ENCODE measurements at regions of chr6 and their contacts with region 1.

Region 1: GRCh38 chr6:157184202-157185020 is 138.9 kb downstream of the TMEM242 start:
- DNase-seq: peak; percentile 69
- ATAC-seq: peak; percentile 95
- H3K4me3 ChIP-seq: no peak overlapping the region
- H3K27ac ChIP-seq: no peak overlapping the region
- H3K4me1 ChIP-seq: peaks cover 26% of the 10 kb centered on the region
- H3K27me3 ChIP-seq: no peaks in the 10 kb centered on the region
- CTCF ChIP-seq: peak; percentile 91
- EP300 ChIP-seq: no peak
- POLR2A ChIP-seq: no peak
- RAD21 ChIP-seq: peak; percentile 93

Region 2: DNA sequence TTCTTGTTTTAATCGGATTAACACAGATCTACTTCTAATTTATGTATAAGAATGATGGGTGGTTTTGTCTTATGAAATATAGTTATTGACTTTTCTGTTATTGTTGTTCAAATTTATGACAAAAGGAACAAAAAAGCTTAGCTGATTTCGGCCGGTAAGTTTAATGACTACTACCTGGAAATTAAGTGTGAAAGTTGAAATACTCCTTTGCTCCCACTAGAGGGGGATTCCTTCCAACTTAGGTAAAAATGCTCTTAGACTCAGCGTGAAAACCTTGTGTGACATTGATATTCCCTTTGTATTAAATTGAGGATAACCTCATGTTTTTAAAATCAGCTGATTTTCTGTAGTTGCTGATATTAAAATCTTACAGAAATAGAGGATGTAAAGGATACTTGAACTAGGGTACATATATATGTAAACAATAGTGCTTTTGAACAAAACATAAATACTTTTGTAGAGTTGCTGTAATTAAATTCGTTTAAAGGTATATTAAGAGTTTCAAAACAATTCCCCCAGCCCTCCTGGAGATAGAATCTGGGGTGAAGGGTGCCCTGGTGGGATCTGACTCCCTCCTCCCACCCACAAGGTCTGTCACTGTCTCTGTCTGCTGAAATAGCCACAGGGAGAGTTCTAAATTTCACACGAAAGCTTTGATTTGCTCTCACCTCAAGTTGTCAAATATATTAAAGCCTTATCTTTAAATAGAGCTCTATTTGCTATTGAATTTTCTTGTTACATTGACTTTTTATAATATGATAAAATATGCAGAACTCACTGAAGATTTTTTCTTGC is 149.8 kb before region 1 on chr6:
- CTCF ChIA-PET with region 1: interaction called, 6 read pairs
- POLR2A ChIA-PET with region 1: no interaction called
- in situ Hi-C with region 1: loop called (anchors 10 kb)
- intact Hi-C with region 1: loop called (anchors 1 kb)
- DNase-seq: peak; percentile 54
- ATAC-seq: peak; percentile 87
- H3K4me3 ChIP-seq: no peak overlapping the region
- H3K27ac ChIP-seq: no peak overlapping the region
- H3K4me1 ChIP-seq: peaks cover 14% of the 10 kb centered on the region
- H3K27me3 ChIP-seq: no peaks in the 10 kb centered on the region
- CTCF ChIP-seq: peak; percentile 73
- EP300 ChIP-seq: no peak
- POLR2A ChIP-seq: no peak
- RAD21 ChIP-seq: peak; percentile 62

Region 3: DNA sequence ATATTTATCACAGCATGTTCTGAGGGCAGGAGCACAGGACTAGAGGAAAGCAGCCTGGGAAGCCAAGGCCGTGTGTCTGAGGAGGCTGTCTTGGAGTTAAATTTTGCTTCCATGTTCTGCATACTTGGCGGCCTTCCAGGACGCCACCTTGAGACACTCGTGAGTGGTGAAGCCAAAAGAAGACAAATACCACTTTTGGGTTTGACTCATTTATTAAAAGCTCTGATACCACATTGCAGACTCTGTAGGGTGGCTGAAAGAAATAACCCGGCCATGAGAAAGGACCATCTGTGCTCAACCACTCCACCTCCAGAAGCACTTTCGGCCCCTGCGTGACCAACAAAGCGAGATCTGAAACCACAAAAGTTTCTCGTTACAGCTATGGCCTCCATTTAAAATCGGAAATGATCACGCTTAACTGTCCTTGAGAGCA is 18.9 kb after region 1 on chr6:
- CTCF ChIA-PET with region 1: no interaction called
- POLR2A ChIA-PET with region 1: no interaction called
- in situ Hi-C with region 1: no loop called
- intact Hi-C with region 1: no loop called
- DNase-seq: no peak
- ATAC-seq: no peak
- H3K4me3 ChIP-seq: no peak overlapping the region
- H3K27ac ChIP-seq: no peak overlapping the region
- H3K4me1 ChIP-seq: no peaks in the 10 kb centered on the region
- H3K27me3 ChIP-seq: no peaks in the 10 kb centered on the region
- CTCF ChIP-seq: no peak
- EP300 ChIP-seq: no peak
- POLR2A ChIP-seq: no peak
- RAD21 ChIP-seq: no peak